ENCODE measurements at regions of chr11 and their contacts with region 1.

Region 1: DNA sequence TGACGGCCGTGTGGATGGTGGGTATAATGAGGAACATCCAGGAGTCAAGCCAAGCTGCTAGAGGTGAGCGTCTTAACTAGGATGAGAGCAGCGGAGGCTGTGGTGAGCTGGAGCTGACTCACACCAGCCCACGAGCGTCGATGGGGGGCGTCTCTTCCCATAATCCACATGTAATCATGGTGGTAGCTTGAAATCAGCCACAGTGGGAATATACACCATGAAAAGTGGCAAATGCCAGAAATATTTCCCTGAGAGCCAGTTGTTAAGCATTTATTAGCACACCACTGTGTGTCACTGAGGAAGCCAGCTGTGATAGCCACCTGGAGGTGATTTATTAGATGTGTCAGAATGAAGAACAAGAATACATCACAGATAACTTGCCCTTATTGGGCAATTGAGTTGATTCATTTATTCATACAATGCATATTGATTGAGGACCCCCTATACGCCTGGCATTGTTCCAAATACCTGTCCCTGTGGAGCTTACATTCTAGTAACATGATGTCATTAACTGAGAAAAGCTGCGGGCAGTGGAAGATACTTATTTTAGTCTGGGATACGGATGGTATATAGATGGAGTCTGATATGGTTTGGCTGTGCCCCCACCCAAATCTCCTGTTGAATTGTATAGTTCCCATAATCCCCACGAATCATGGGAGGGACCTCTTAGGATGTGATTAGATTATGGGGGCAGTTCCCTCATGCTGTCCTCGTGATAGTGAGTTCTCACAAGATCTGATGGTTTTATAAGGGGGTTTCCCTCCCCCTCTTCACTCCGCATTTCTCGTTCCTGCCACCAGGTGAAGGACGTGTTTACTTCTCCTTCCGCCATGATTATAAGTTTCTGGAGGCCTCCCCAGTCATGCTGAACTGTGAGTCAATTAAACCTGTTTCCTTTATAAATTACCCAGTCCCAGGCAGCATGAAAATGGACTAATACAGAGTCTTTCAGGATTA is 473.4 kb downstream of the METTL15 start:
- DNase-seq: no peak
- H3K4me3 ChIP-seq: no peak overlapping the region
- H3K27ac ChIP-seq: no peak overlapping the region
- H3K4me1 ChIP-seq: no peaks in the 10 kb centered on the region
- H3K27me3 ChIP-seq: no peaks in the 10 kb centered on the region
- CTCF ChIP-seq: peak in 2 of 3 experiments; percentile 26 to 31; a peak in 2 of 4 replicates
- EP300 ChIP-seq: no peak
- POLR2A ChIP-seq: no peak
- RAD21 ChIP-seq: no peak; a peak in 1 of 4 replicates

Region 2: GRCh38 chr11:28596816-28597215 is 15.3 kb after region 1 on chr11:
- CTCF ChIA-PET with region 1: interaction called, 13 read pairs
- POLR2A ChIA-PET with region 1: no interaction called
- DNase-seq: no peak
- H3K4me3 ChIP-seq: no peak overlapping the region
- H3K27ac ChIP-seq: no peak overlapping the region
- H3K4me1 ChIP-seq: no peaks in the 10 kb centered on the region
- H3K27me3 ChIP-seq: no peaks in the 10 kb centered on the region
- CTCF ChIP-seq: no peak
- EP300 ChIP-seq: no peak
- POLR2A ChIP-seq: no peak
- RAD21 ChIP-seq: no peak